ENCODE measurements at regions of chrX and their contacts with region 1.

Region 1: DNA sequence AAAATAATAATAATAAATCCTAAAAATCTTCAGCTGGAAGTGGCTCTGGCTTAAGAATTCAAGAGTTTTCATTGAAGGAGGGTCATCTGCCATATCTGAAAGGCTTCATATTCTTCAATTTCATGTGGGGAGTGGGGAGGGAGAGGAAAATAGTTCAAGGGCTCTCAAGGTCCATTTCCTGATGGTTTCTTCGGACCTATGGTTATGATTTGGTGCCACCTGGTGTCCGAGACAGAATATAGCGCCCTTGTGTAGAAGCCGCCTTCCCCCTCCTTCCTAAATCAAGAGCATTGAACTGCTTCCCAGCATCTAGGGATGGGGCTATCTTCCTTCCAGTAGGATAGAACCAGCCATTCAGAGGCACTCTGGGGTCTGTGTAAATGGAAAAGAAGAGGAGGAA is 34.3 kb downstream of the NLGN3 start:
- DNase-seq: peak; percentile 27
- H3K4me3 ChIP-seq: no peak overlapping the region
- H3K27ac ChIP-seq: no peak overlapping the region
- H3K27me3 ChIP-seq: no peaks in the 10 kb centered on the region
- CTCF ChIP-seq: peak; percentile 59

Region 2: DNA sequence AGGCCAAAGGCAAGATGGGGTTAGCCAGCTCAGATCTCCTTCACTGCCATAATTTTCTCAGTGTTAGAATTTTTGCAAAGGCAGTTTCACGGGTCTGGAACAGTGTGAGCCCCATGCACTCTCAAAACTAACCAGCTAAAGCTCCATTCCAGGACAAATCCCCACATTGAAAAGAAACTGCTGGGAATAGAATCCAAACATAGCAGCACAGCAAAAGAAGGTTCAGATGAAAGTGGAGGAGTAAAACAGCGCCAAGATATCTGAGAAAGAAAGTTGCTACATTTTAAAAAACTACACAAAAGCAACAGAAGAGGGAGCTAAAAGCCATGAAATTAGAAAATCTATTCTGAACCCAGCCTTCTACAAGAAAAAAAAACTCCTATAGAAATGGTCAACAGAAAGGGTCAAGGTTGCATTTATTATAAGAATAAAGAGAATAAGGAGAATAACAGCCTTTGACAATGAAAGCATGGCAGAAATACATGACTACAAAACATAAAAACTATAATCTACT is 208.4 kb before region 1 on chrX:
- CTCF ChIA-PET with region 1: interaction called, 51 read pairs
- POLR2A ChIA-PET with region 1: no interaction called
- DNase-seq: no peak
- H3K4me3 ChIP-seq: no peak overlapping the region
- H3K27ac ChIP-seq: no peak overlapping the region
- H3K27me3 ChIP-seq: no peaks in the 10 kb centered on the region
- CTCF ChIP-seq: peak; percentile 45

Region 3: DNA sequence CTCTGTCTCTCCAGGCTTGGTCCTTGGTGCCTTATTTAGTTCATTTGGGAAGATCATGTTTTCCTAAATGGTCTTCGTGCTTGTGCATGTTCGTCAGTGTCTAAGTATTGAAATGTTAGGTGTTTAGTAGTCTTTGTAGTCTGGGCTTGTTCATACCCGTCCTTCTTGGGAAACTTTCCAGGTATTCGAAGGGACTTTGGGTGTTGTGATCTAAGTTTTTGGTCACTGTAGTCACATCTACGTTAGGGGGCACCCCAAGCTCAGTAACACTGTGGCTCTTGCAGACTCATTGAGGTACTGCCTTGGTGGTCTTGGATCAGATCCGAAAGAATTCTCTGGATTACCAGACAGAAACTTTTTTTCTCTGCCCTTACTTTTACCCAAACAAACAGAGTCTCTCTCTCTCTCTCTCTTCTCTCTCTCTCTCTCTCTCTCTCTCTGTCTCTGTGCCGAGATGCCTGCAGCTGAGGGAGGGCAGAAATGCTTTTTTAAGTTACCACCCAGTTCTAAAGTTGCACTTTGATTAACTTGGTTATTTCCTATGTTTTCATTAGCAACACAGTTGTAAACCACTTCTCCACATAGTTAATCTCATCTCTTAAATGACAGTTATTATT is 180.4 kb before region 1 on chrX:
- CTCF ChIA-PET with region 1: interaction called, 28 read pairs
- POLR2A ChIA-PET with region 1: no interaction called
- DNase-seq: no peak
- H3K4me3 ChIP-seq: no peak overlapping the region
- H3K27ac ChIP-seq: no peak overlapping the region
- H3K27me3 ChIP-seq: no peaks in the 10 kb centered on the region
- CTCF ChIP-seq: peak; percentile 50

Region 4: GRCh38 chrX:71166461-71166860 is 12.4 kb before region 1 on chrX:
- CTCF ChIA-PET with region 1: no interaction called
- POLR2A ChIA-PET with region 1: no interaction called
- DNase-seq: no peak
- H3K4me3 ChIP-seq: no peak overlapping the region
- H3K27ac ChIP-seq: no peak overlapping the region
- H3K27me3 ChIP-seq: no peaks in the 10 kb centered on the region
- CTCF ChIP-seq: no peak

Region 5: DNA sequence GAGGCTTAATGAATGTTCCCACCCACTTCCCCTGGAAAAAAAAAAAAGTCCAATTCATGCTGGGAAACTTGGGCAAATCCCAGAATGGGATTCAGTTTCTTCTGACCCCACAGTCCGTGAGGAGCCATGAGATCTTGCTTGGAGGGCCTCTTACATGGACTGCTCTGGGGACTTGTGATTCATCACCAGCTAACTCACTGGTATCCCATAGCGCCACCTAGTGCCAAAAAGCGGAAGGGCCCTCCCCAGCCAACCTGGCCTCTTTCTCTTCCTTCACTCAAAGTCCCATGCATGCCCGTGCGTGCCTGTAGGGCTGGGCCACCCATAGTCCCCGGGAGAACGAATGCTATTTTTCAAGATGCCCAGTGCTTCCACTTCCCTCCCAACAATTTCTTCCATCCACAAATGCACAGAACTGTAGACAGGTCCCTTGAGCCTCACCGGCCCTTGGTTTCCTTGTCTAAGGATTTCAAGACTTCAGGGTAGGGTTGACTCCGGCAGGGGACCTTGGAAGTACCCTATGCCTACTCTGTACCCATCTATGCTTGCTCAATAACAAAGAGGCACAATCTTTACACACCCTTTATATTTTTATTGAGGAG is 947.7 kb after region 1 on chrX:
- CTCF ChIA-PET with region 1: no interaction called
- POLR2A ChIA-PET with region 1: no interaction called
- DNase-seq: peak; percentile 57
- H3K4me3 ChIP-seq: no peak overlapping the region
- H3K27ac ChIP-seq: no peak overlapping the region
- H3K27me3 ChIP-seq: no peaks in the 10 kb centered on the region
- CTCF ChIP-seq: peak; percentile 81

Measured in AG04450 (cell line).